ENCODE measurements at regions of chr1 and their contacts with region 1.

Region 1: GRCh38 chr1:201511941-201512539 is 5.1 kb upstream of the CSRP1 start:
- DNase-seq: peak; percentile 75
- ATAC-seq: peak; percentile 82

Region 2: DNA sequence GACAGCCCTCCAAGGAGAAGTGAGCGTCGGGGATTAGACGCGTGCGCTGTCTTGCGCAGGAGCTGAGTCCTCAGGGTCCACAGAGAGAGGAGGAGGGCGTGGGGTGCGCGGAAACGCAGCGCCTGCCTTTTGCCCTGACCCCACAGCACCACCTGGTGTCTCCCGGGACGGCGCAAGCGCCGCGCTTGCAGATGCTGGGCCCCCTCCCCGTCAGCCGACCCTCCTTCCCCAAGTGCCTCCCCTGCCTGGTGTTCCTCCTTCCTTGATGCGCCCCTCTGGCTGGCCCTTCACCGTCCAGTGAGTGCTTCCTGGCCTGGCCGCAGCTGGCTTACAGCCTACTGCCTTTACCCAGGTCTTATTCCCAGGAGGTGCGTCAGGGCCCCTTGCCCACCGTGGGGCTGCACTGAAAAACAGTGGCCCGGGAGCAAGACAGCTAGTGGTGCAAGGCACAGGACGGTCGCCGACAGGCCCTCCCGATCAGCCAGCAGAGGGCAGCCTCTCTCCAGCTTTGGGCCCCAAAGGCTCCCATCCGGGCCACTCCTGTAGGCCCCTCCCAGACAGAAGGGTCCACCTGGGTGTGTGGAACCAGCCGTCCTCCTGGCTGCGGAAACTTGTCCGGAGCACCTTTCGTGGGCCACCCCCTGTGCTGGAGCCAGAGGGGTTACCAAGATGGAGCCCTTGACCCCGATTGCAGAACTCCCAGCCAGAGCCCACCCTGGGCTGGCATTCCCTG is 30.1 kb before region 1 on chr1:
- intact Hi-C with region 1: loop called (anchors 2 kb)
- DNase-seq: peak; percentile 95
- ATAC-seq: peak; percentile 89

Region 3: DNA sequence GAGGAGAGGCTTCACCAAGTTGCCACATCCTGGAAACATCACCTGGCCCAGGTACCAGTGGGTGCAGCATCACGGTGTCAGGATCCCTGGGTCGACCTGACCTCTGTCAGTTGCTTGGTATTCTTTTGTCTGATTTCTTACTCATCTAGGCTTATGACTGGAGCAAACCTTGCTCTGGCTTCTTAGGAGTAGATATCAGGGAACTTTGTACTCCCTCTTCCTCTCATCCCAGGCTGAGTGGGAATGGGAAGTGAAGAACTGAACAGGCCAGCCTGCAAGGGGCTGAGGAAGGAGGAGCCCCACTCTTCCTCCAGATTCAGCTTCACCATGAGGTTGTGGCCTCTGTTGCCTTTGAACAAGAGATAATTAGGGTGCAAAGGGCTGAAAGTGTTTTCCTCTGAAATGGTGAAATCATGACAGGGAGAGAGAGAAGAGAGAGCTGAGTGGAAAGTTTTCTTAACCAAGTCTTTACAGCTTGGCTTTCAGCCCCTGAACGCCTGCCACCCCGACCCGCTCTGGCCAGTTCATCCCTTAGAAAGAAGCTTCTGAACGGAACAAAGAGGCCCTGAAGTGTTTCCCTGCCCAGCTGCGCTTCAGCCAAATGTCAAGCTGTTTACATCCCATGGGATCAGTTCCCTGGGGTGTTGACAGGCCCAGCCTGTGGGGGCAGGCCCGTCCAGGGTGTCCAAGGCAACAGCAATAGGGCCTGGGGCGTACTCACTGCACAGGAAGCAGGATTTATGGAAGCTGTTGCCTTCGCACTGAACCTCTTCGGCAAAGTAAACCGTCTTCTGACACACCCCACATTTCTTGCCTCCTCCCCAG is 16.4 kb before region 1 on chr1:
- intact Hi-C with region 1: no loop called
- DNase-seq: peak; percentile 86
- ATAC-seq: peak; percentile 77

Region 4: DNA sequence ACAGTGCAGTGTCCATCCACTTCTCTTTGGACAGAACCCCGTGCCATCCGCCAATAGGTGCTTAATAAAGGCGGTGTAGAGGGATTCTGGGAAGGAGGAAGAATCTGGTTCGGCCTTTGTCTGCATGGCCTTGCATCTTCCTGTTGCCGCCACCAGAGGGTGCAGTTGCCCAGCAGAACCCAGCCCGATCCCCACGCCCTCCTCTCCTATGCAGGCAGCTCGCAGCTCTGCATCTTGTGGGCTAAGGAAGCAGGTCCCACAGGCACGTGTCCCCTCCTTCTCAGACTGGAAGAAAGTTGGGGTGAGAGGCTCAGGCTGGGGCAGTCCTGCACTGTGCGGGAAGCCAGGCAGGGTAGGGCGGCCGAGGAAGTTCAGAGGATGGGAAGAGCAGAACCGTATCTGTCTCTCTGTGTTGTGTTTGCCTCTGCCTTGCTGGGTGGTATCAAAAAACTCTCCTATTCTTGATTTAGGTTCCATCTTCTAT is 47.7 kb after region 1 on chr1:
- intact Hi-C with region 1: no loop called
- DNase-seq: peak; percentile 90
- ATAC-seq: peak; percentile 90

Measured in sciatic nerve (tissue), 2 donors.